Posterior cingulate gyrus (tissue), 11 donors: ENCODE measurements at regions of chr18 and their contacts with region 1.

Region 1: GRCh38 chr18:58117786-58118403 is 73.9 kb downstream of the NEDD4L start:
- DNase-seq: peak in 3 of 10 donors; percentile 19 to 86 (median 41)

Region 2: GRCh38 chr18:57881818-57882413 is 236.0 kb before region 1 on chr18:
- intact Hi-C with region 1: loop called (anchors 1 kb)
- DNase-seq: peak; percentile 31 to 96 (median 73)

Region 3: DNA sequence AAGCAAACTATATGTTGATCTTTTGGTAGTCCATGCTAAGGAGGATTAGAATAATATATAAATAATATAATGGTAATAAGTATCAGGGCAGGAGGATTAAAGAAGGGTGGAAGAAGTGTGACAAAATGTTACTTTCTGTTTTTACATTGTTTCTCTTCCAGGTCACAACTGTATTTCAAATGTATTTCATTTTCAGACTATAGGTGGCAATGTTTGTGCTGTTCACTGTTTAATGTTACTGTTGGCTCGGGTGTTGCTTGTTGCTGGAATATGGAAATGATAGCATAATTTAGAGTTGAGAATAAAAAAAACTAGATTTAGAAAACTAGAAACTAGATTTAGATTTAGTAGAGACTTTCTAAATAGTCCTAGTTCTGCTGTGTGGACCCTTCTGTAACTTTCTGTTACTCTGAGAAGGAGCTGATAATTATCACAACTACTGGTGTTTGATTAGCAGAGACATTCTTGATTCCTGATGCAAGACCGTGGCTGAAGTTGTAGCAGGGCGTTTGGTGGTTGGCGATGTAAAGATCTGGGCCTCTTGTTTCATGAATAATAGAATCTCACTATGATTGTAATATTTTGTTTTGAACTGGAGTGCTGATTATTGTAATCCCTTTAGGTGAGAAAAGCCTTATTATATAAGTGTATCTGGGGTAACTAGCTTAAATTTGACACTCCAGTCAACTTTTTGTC is 66.0 kb before region 1 on chr18:
- intact Hi-C with region 1: loop called (anchors 2 kb)
- DNase-seq: no peak

Region 4: DNA sequence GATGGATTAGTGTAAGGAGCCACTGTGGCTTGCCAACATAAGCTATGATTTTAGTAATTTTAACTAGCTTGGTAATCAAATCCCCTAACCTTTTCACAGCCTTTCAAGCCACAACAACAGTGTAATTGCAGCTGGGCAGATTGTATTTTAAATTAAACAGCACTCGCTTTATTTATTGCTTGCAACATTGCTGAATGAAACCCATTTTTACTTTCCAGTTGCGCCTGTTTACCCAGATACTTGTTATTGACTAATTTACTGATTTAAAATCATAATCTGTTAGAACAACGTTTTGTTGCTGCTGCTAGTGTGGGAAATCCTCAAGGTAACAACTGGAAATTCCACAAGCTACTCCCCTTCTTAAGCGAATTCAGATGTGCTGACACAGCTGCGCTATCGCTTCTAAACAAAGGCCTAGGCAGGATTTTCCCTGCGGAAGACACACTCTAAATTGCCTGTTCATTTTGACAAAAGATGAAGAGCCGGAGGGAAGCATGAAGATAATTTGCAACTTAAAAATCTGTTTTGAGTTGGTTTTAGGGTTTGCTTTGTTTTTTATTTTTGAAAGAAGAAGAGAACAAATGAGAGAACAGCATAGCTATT is 227.1 kb after region 1 on chr18:
- intact Hi-C with region 1: no loop called
- DNase-seq: no peak

Region 5: DNA sequence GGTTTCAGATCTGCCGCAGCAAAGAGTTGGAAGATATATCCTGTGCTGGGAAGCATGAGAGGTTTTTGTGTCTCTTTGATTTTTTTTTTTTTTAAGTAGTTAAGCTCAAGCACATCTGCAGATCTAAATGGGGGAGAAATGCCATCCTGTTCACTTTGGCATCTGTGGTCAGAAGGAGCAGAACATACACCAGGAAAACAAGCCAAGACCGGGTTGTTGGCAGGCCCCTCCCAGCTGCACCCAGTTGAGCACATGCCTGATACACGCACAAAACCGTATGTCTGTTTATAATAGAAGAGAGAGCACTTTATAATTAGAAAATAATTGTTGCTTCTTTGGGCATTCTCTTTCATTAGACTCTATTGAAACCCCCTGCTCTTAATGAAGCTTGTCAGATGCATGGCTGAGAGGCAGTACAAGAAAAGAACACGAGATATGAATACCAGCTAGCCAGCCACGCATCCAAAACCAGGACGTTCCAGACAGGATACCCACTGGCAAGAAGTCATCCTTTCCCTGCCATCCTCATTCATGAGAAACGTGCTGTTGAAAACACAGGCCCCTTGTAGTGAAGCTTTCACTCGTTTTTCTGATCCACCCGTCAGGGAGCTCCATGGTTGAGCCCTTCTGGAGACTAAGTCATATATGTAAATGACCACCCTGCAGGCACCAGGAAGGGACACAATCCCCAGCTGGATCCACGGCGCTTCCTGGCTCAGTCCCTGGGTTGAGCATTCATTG is 358.8 kb after region 1 on chr18:
- intact Hi-C with region 1: no loop called
- DNase-seq: peak in 1 of 10 donors; percentile 85

Region 6: DNA sequence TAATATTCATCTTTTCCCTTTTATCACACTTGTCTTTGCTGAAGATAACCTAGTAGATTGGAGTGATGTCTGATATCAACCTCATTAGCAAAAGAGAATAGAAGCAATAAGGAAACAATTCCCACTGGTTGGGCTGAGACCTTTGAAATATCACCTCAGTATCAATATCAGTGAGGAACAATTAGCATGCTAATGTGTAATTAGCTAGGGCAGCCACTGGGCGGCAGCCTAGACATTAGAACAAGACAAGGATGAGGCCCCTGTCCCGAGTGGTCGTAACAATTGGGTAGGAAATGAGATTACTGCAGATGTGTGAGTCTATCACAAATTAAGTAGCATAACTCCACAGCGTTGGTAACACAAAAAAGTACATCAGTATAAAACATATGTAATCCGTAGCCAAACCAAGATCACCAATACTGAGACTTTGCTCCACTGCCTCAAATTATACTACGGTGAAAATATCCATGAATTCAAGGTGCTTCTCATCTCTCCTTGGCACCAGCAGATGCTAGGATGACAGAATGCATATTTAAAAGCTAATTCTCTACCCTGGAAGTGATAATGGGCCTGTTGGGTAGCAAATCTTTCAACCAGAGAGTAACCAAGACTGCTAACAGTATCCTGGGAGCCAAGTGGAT is 411.9 kb after region 1 on chr18:
- intact Hi-C with region 1: no loop called
- DNase-seq: peak in 4 of 10 donors; percentile 22 to 40 (median 34)